Stomach (tissue), 19 donors: ENCODE measurements at regions of chr9 and their contacts with region 1.

Region 1: DNA sequence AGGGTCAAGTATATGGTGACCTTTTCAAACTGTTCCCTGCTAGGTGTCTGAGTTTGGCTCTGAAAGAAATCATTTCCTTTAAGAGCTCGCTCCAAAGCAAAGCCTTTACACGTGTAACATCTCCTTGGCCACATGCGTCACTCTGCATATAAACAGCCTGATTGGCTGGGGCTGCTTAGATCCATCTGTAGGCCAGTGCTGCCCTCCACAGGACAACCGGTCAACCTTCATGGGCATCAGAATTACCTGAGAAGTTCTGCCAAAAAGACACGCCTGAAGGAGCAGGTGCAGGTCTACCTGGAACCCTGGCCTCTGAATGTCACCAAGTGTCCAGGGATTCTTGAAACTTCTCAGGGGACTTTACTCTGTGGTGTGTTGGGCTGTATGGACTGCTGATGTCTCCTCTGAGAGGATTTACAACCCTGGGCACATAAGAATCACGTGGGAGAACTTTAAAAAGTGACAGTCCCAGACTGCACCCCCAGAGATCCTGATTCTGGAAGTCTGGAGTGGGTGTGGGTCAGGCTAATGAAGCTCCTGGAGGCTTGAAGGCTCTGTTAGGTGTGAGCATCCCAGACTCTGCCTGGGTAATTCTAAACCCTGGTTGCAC is 497.6 kb downstream of the GADD45G start:
- DNase-seq: peak; percentile 89 to 96
- H3K4me3 ChIP-seq: no peak overlapping the region
- H3K27ac ChIP-seq: no peak overlapping the region
- H3K4me1 ChIP-seq: peaks cover 0 to 18% (median 9%) of the 10 kb centered on the region in 4 donors
- H3K27me3 ChIP-seq: no peaks in the 10 kb centered on the region
- CTCF ChIP-seq: peak in 5 of 7 experiments; percentile 62 to 94 (median 82)
- EP300 ChIP-seq: no peak
- POLR2A ChIP-seq: no peak

Region 2: DNA sequence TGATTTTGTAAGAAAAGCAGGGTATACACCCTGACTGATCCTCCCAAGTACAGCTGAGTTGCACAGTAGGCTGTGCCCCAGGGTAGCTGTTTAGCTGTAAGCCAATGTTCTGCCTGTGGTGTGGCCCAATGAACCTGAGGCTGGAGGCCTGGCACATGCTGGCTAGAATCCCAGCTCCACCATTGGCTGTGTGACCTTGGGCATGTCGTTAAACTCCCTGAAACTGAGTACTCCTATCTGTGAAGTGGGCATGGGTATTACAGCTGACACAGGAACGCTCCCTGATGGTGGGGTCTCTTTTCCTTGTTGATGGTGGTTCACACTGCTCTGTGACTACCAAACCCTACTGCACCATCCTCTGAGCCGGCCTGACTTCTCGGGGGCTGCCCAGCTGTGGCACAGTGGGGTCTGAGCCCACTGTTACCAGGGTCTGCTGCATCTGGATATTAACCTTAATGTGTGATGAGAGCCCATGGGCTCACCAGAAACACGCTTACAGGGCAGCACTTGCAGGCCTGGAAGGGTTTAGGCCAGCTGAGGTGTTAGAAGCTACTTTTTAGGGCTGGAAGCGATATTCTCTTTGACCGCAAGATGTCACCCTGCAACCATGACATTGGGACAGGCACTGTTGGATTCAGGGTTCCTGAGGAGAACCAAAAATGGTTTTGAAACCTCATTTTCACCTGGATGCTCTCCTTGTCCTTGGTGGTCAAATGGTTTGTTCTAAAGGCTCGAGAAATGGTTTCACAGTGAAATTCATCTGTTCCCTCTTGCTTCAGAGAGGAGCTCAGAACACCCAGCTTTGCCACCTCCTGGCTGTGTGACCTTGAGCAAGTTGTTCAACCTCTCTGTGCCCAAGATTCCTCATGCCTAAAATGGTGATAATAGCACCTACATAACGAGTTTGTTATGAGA is 504.4 kb before region 1 on chr9:
- intact Hi-C with region 1: loop called (anchors 2 kb)
- DNase-seq: peak; percentile 64 to 87
- H3K4me3 ChIP-seq: no peak overlapping the region
- H3K27ac ChIP-seq: no peak overlapping the region
- H3K4me1 ChIP-seq: peaks cover 0 to 13% (median 6%) of the 10 kb centered on the region in 4 donors
- H3K27me3 ChIP-seq: no peaks in the 10 kb centered on the region
- CTCF ChIP-seq: peak in 5 of 7 experiments; percentile 70 to 88 (median 78)
- EP300 ChIP-seq: no peak
- POLR2A ChIP-seq: no peak

Region 3: GRCh38 chr9:89732295-89732938 is 370.0 kb before region 1 on chr9:
- intact Hi-C with region 1: loop called (anchors 10 kb)
- DNase-seq: no peak
- H3K4me3 ChIP-seq: no peak overlapping the region
- H3K27ac ChIP-seq: peak overlapping the region in 2 of 5 donors; percentile 40 to 68
- H3K4me1 ChIP-seq: peaks cover 20 to 30% (median 23%) of the 10 kb centered on the region in 4 donors
- H3K27me3 ChIP-seq: no peaks in the 10 kb centered on the region
- CTCF ChIP-seq: no peak
- EP300 ChIP-seq: no peak
- POLR2A ChIP-seq: no peak

Region 4: DNA sequence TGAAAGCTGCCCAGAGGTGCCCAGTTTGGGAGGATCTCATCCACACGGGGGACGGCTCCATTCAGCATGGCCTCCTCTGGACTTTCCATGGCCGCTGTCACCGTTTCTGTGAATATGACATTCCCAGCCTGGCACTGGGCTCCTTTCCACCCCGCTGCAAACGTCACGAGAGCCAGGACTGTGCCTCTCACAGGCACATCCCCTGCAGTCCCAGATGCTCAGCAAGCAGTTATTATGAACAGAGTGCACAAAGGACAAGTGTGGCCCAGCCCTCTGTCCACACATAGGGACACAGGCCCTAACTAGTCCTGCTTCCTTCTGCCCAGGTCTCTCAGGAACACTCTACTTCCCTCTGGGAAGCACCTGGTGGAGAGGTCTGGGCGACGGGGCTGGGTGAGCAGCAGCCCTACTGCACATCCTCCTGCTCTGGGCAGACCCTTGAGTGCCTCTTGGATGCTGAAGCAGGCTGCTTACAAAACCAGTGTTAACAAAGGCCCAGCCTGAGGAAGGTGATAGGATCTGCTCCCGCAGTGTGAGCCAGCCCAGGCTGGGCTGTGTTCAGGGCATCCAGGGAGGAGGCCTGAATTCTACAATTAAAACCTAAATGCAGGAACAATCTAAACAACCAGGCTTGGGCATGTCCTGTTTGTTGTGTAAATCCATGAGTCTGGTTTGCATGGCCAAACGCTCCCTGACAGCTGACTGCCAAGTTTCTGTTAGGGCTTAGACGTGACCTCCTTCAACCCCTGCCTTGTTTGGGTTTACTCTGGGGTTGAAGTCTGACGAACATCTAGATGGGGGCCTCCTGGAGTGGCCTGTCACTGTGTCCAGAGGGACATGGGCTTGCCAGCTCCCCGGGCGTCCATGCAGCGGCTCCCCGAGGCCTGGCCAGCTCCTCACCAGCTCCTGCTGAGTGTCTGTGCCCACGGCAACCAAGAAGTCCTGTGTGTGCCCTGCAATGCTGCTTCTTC is 227.8 kb before region 1 on chr9:
- intact Hi-C with region 1: no loop called
- DNase-seq: peak; percentile 26 to 50
- H3K4me3 ChIP-seq: no peak overlapping the region
- H3K27ac ChIP-seq: peak overlapping the region; percentile 19 to 77 (median 51)
- H3K4me1 ChIP-seq: peaks cover 29 to 69% (median 41%) of the 10 kb centered on the region in 4 donors
- H3K27me3 ChIP-seq: no peaks in the 10 kb centered on the region
- CTCF ChIP-seq: no peak
- EP300 ChIP-seq: peak; percentile 53
- POLR2A ChIP-seq: no peak

Region 5: GRCh38 chr9:89929673-89930480 is 172.5 kb before region 1 on chr9:
- intact Hi-C with region 1: loop called (anchors 10 kb)
- DNase-seq: peak in 1 of 2 donors; percentile 65
- H3K4me3 ChIP-seq: no peak overlapping the region
- H3K27ac ChIP-seq: no peak overlapping the region
- H3K4me1 ChIP-seq: peaks cover 13 to 52% (median 31%) of the 10 kb centered on the region in 4 donors
- H3K27me3 ChIP-seq: no peaks in the 10 kb centered on the region
- CTCF ChIP-seq: no peak
- EP300 ChIP-seq: no peak
- POLR2A ChIP-seq: no peak